GM12878 (cell line): ENCODE measurements at regions of chr4 and their contacts with region 1.

Region 1: GRCh38 chr4:48237996-48238645 is 31.5 kb downstream of the TEC start:
- DNase-seq: no peak
- ATAC-seq: no peak
- H3K4me3 ChIP-seq: no peak overlapping the region
- H3K27ac ChIP-seq: no peak overlapping the region
- H3K4me1 ChIP-seq: peaks cover 7% of the 10 kb centered on the region
- H3K27me3 ChIP-seq: no peaks in the 10 kb centered on the region
- CTCF ChIP-seq: no peak
- EP300 ChIP-seq: no peak
- POLR2A ChIP-seq: no peak
- RAD21 ChIP-seq: no peak

Region 2: GRCh38 chr4:48254381-48255071 is 16.4 kb after region 1 on chr4:
- CTCF ChIA-PET with region 1: interaction called, 5 read pairs
- POLR2A ChIA-PET with region 1: interaction called, 11 read pairs
- RAD21 ChIA-PET with region 1: no interaction called
- SMC1A ChIA-PET with region 1: interaction called, 12 read pairs
- in situ Hi-C with region 1: no loop called
- intact Hi-C with region 1: no loop called
- DNase-seq: no peak
- ATAC-seq: no peak
- H3K4me3 ChIP-seq: no peak overlapping the region
- H3K27ac ChIP-seq: no peak overlapping the region
- H3K4me1 ChIP-seq: peaks cover 2% of the 10 kb centered on the region; the same call in 1 of the 2 replicates
- H3K27me3 ChIP-seq: no peaks in the 10 kb centered on the region
- CTCF ChIP-seq: no peak
- EP300 ChIP-seq: no peak
- POLR2A ChIP-seq: no peak
- RAD21 ChIP-seq: no peak

Region 3: DNA sequence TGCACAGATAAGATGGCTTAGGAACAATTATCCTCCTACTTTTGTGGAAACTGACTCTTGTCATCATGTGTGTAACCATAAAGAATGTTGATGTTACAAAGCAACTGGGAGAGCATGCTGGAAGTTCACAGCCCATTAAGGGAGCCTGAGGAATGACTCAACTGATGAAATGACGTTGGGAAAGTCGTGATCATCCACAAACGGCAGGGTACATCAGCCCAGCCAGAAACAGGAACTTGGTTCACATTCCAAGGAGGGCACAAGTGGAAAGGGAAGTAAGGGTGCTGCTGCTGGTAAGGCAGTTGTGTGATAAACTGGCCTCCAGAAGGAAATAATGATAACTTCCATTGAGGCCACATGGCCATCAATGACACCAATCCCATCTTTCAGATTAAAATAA is 24.8 kb after region 1 on chr4:
- CTCF ChIA-PET with region 1: interaction called, 3 read pairs
- POLR2A ChIA-PET with region 1: no interaction called
- RAD21 ChIA-PET with region 1: interaction called, 3 read pairs
- SMC1A ChIA-PET with region 1: interaction called, 15 read pairs
- in situ Hi-C with region 1: no loop called
- intact Hi-C with region 1: no loop called
- DNase-seq: no peak
- ATAC-seq: no peak
- H3K4me3 ChIP-seq: no peak overlapping the region
- H3K27ac ChIP-seq: no peak overlapping the region
- H3K4me1 ChIP-seq: peaks cover 27% of the 10 kb centered on the region
- H3K27me3 ChIP-seq: no peaks in the 10 kb centered on the region
- CTCF ChIP-seq: no peak
- EP300 ChIP-seq: no peak
- POLR2A ChIP-seq: no peak
- RAD21 ChIP-seq: no peak

Region 4: DNA sequence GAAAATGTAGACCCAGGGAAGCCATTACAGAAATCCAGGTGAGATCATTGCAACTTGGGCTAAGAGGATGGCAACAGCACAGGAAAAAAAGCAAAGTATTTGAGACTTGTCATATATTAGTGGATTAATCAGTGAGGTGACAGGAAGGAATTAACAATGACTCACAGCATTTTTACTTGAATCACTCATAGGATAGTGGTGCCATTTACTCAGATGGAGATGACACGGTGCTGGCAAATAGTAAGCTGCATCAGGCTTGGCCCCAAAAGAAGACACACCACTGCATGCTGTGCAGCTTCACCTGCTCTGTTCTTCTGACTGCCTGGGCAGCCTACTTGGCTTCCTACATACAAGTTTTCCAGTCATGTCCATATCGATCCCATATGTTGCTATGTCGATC is 397.2 kb after region 1 on chr4:
- CTCF ChIA-PET with region 1: no interaction called
- POLR2A ChIA-PET with region 1: no interaction called
- RAD21 ChIA-PET with region 1: no interaction called
- SMC1A ChIA-PET with region 1: no interaction called
- in situ Hi-C with region 1: no loop called
- intact Hi-C with region 1: no loop called
- DNase-seq: no peak
- ATAC-seq: peak; percentile 74
- H3K4me3 ChIP-seq: no peak overlapping the region
- H3K27ac ChIP-seq: no peak overlapping the region
- H3K4me1 ChIP-seq: peaks cover 14% of the 10 kb centered on the region
- H3K27me3 ChIP-seq: no peaks in the 10 kb centered on the region
- CTCF ChIP-seq: no peak
- EP300 ChIP-seq: no peak
- POLR2A ChIP-seq: no peak
- RAD21 ChIP-seq: no peak